ENCODE measurements at regions of chr7 and their contacts with region 1.

Region 1: DNA sequence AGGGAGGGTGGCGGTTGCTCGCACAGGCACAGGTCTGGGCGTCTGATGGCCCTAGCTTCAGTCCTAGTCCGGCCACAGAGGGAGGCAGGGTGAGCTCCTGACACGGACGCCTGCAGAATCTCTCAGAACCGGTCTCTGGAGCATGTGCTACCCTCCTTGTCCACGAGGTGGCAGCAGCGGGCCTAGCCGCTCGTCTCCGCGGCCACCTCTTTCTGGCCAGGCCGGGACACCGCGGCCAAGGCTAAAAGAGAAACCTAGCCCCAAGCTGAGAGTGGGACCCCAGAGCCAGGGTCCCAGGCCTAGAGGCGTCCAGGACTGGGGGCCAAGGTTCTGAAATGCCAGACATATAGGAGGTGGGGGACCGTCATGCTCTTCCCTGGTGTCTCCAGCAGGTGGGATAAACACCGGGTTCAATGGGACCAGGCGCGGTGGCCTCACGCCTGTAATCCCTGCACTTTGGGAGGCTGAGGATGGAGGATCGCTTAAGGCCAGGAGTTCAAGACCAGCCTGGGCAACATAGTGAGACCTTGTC is 3.2 kb upstream of the LAT2 start:
- DNase-seq: peak; percentile 87 to 92
- ATAC-seq: peak; percentile 82 to 91 (median 86)
- H3K4me3 ChIP-seq: peak overlapping the region; percentile 50
- H3K27ac ChIP-seq: no peak overlapping the region
- H3K4me1 ChIP-seq: peaks cover 2% of the 10 kb centered on the region
- H3K27me3 ChIP-seq: no peaks in the 10 kb centered on the region
- CTCF ChIP-seq: peak; percentile 97

Region 2: GRCh38 chr7:74051629-74052410 is 154.8 kb before region 1 on chr7:
- intact Hi-C with region 1: no loop called
- DNase-seq: peak in 1 of 2 donors; percentile 59
- ATAC-seq: peak in 3 of 4 donors; percentile 23 to 69 (median 27)
- H3K4me3 ChIP-seq: no peak overlapping the region
- H3K27ac ChIP-seq: no peak overlapping the region
- H3K4me1 ChIP-seq: no peaks in the 10 kb centered on the region
- H3K27me3 ChIP-seq: peaks cover 0 to 7% (median 0%) of the 10 kb centered on the region in 3 donors
- CTCF ChIP-seq: no peak

Region 3: GRCh38 chr7:74254129-74254857 is 47.6 kb after region 1 on chr7 and contains the start of gene RFC2:
- intact Hi-C with region 1: loop called in 1 of 2 experiments (anchors 5 kb)
- DNase-seq: peak; percentile 98 to 99
- ATAC-seq: peak; percentile 100
- H3K4me3 ChIP-seq: peak within 1 kb of the TSS; percentile 89
- H3K27ac ChIP-seq: peak within 1 kb of the TSS; percentile 88
- H3K4me1 ChIP-seq: peaks cover 17% of the 10 kb centered on the region
- H3K27me3 ChIP-seq: no peaks in the 10 kb centered on the region
- CTCF ChIP-seq: peak; percentile 30
- total RNA-seq, gene RFC2: 13.7 to 19.8 (median 18.1) TPM

Region 4: DNA sequence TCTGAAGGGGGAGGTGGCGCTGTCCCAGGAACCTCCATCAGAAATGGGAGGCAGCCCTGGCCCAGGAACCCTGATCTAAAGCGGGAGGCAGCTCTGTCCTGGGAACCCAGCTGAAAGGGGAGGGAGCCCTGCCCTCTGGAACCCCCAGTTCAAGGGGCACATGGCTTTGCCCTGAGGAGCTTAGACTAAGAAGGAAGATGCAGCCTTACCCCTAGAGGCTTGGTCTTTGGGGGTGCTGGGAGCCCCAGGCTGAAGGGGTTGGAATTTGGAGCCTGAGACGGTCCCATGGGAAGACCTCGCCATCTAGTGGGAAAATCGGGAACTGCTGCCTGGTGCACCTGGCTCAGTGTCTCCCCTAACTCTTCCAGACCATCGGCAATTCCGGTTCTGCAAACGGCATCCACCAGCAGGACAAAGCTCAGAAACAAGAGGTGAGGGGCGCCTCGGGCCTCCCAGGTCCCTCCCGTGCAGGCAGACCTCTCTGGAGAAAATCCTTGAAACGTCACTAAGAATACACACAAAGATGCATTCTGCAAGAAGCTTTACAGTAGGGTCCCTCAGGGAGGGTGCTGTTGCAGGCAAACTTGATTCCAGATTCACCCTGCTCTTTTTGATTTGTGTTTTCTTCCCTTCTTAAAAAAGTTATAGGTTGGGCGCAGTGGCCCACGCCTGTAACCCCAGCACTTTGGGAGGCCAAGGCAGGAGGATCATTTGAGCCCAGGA is 194.6 kb after region 1 on chr7:
- intact Hi-C with region 1: loop called (anchors 1 to 2 kb)
- DNase-seq: peak; percentile 65 to 80
- ATAC-seq: peak; percentile 66 to 89 (median 80)
- H3K4me3 ChIP-seq: no peak overlapping the region
- H3K27ac ChIP-seq: no peak overlapping the region
- H3K4me1 ChIP-seq: no peaks in the 10 kb centered on the region
- H3K27me3 ChIP-seq: no peaks in the 10 kb centered on the region
- CTCF ChIP-seq: peak; percentile 98

Measured in psoas muscle (tissue), 8 donors.